K562 (cell line): ENCODE measurements at regions of chr6 and their contacts with region 1.

Region 1: DNA sequence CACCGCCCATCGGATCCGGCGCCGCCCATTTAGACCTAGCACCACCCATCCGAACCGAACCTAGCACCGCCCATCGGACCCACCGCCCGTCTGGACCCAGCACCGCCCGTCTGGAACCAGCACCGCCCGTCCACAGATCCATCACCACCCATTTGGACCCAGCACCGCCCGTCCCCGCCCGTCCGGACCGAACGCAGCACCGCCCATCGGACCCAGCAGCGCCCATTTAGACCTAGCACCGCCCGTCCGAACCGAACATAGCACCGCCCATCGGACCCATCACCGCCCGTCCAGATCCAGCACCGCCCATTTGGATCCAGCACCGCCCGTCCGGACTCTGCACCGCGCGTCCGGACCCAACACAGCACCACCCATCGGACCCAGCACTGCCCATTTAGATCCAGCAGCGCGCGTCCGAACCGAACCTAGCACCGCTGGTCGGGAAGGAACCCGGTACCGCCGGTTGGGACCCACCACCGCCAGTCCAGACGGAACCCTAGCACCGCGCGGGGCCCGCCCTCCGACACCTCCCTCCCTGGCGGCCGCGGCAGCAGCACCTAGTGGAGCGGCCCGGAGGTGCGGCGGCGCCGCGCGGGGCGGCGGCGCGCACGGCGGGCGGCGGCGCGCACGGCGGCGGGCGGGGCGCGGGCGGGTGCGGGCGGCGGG is 348 bp upstream of the AFDN start:
- DNase-seq: peak; percentile 51 to 90 (median 76)
- ATAC-seq: peak; percentile 70
- H3K4me3 ChIP-seq: peak overlapping the region; percentile 85
- H3K27ac ChIP-seq: peak overlapping the region; percentile 56
- H3K4me1 ChIP-seq: peaks cover 24 to 30% of the 10 kb centered on the region in 2 experiments
- H3K27me3 ChIP-seq: no peaks in the 10 kb centered on the region
- CTCF ChIP-seq: peak; percentile 31 to 69 (median 58); a peak in 4 of 6 replicates
- EP300 ChIP-seq: no peak
- POLR2A ChIP-seq: no peak
- RAD21 ChIP-seq: peak in 1 of 2 experiments; percentile 33; a peak in 3 of 4 replicates

Region 2: GRCh38 chr6:167766986-167767714 is 59.2 kb before region 1 on chr6:
- CTCF ChIA-PET with region 1: no interaction called
- POLR2A ChIA-PET with region 1: no interaction called
- in situ Hi-C with region 1: no loop called
- intact Hi-C with region 1: loop called (anchors 5 kb)
- DNase-seq: peak; percentile 68 to 72 (median 72)
- ATAC-seq: peak; percentile 96
- H3K4me3 ChIP-seq: no peak overlapping the region
- H3K27ac ChIP-seq: no peak overlapping the region
- H3K4me1 ChIP-seq: no peaks in the 10 kb centered on the region
- H3K27me3 ChIP-seq: peaks cover 87% of the 10 kb centered on the region in 2 experiments
- CTCF ChIP-seq: peak; percentile 77 to 83 (median 83)
- EP300 ChIP-seq: no peak
- POLR2A ChIP-seq: no peak
- RAD21 ChIP-seq: peak; percentile 80 to 90